T-cell (primary cell): ENCODE measurements at regions of chr12 and their contacts with region 1.

Region 1: GRCh38 chr12:8712572-8712971 is 14.8 kb downstream of the RIMKLB start:
- DNase-seq: no peak
- ATAC-seq: no peak
- H3K4me3 ChIP-seq: no peak overlapping the region
- H3K4me3 Mint-ChIP-seq: no peak overlapping the region
- H3K27ac ChIP-seq: no peak overlapping the region
- H3K27ac Mint-ChIP-seq: no peak overlapping the region
- H3K4me1 ChIP-seq: peaks cover 0 to 4% of the 10 kb centered on the region in 2 experiments
- H3K4me1 Mint-ChIP-seq: peaks cover 10 to 17% (median 12%) of the 10 kb centered on the region in 3 donors
- H3K27me3 ChIP-seq: no peaks in the 10 kb centered on the region
- H3K27me3 Mint-ChIP-seq: no peaks in the 10 kb centered on the region

Region 2: DNA sequence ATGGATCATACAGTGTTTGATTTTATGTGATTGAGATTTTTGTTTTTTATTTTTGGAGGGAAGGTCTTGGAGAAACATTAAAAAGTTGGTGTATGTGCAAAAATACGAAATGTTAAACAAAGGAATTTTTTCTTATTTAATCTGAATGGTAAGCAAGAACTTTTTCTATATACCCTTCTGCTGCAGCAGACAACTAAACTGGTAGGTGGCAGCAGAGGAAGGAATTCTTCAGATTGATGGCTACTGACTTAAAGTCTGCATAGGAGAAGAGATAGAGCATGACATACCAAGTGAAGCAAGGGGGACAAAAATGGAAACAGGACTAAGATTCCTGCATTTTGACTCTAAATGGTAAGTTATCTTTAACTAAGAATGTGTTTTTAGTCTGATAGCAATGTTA is 67.8 kb after region 1 on chr12:
- CTCF ChIA-PET with region 1: interaction called in 1 of 2 experiments, 10 read pairs
- POLR2A ChIA-PET with region 1: no interaction called
- DNase-seq: peak in 1 of 35 experiments; percentile 27
- ATAC-seq: no peak
- H3K4me3 ChIP-seq: no peak overlapping the region
- H3K4me3 Mint-ChIP-seq: no peak overlapping the region
- H3K27ac ChIP-seq: no peak overlapping the region
- H3K27ac Mint-ChIP-seq: no peak overlapping the region
- H3K4me1 ChIP-seq: no peaks in the 10 kb centered on the region
- H3K4me1 Mint-ChIP-seq: no peaks in the 10 kb centered on the region
- H3K27me3 ChIP-seq: no peaks in the 10 kb centered on the region
- H3K27me3 Mint-ChIP-seq: no peaks in the 10 kb centered on the region